A549 (cell line): ENCODE measurements at regions of chr17 and their contacts with region 1.

Region 1: GRCh38 chr17:49707608-49708514 is at the start of gene SLC35B1:
- DNase-seq: peak; percentile 100
- ATAC-seq: peak; percentile 97 to 99
- H3K4me3 ChIP-seq: peak within 1 kb of the TSS; percentile 87
- H3K27ac ChIP-seq: peak within 1 kb of the TSS; percentile 90
- H3K4me1 ChIP-seq: peaks cover 10% of the 10 kb centered on the region
- CTCF ChIP-seq: peak; percentile 96
- EP300 ChIP-seq: 0 out of 5 replicates have a peak, but pooled peaks of 1 of the 2 experiments have one; percentile 25
- POLR2A ChIP-seq: peak; percentile 75
- RAD21 ChIP-seq: peak; percentile 63 to 68
- polyA plus RNA-seq, gene SLC35B1: 191 and 287 TPM in 2 replicates

Region 2: GRCh38 chr17:49694847-49695683 is 12.8 kb before region 1 on chr17:
- CTCF ChIA-PET with region 1: interaction called, 481 read pairs
- POLR2A ChIA-PET with region 1: interaction called, 19 read pairs
- DNase-seq: peak; percentile 33 to 58
- ATAC-seq: peak; percentile 36 to 64; a peak in 4 of 6 replicates
- H3K4me3 ChIP-seq: no peak overlapping the region
- H3K27ac ChIP-seq: no peak overlapping the region
- H3K4me1 ChIP-seq: no peaks in the 10 kb centered on the region
- CTCF ChIP-seq: peak; percentile 98
- EP300 ChIP-seq: no peak
- POLR2A ChIP-seq: no peak
- RAD21 ChIP-seq: peak; percentile 98

Region 3: GRCh38 chr17:49779739-49780231 is 71.9 kb after region 1 on chr17:
- CTCF ChIA-PET with region 1: interaction called, 13 read pairs
- POLR2A ChIA-PET with region 1: interaction called, 3 read pairs
- DNase-seq: peak; percentile 34 to 60
- ATAC-seq: peak; percentile 84 to 86
- H3K4me3 ChIP-seq: no peak overlapping the region
- H3K27ac ChIP-seq: no peak overlapping the region
- H3K4me1 ChIP-seq: no peaks in the 10 kb centered on the region
- CTCF ChIP-seq: peak; percentile 54
- EP300 ChIP-seq: no peak
- POLR2A ChIP-seq: no peak
- RAD21 ChIP-seq: peak; percentile 37 to 54; a peak in 4 of 5 replicates

Region 4: DNA sequence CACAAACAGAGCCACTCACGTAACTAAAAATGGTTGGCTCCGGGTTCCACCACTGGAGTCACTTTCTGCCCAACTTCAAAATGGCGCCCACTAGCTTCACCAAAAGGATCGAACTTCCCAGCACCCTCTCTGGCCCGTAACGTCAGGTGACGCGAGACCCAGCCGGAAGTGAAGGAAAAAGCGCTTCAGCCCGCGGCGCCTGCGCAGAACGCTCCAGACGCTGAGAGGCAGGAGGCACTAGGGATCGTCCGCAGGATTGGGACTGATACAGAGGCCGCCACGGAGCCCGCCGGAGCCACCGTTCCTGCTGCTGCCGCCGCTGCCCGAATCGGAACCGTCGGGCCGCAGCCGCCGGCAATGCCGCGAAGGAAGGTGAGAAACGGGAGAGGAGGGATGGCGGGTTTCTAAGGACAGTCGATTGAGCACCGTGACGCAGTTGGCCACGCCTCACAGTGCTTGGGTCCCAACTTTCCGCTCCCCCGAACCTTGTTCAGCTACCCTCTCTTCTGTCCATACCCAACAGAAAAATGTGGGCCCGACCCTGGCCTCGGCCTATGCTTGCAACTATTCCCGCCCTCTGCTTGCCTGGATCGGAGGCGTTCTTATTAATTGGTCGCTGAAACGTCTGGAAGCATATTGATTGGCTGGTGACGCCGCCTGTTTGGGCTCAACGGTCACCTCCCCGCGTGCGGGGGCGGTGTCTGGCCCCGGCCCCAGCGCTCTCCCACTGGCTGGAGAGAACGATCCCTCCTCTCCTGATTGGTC is 80.8 kb after region 1 on chr17 and contains the start of gene KAT7:
- CTCF ChIA-PET with region 1: interaction called, 7 read pairs
- POLR2A ChIA-PET with region 1: interaction called, 11 read pairs
- DNase-seq: peak; percentile 96 to 100
- ATAC-seq: peak; percentile 95 to 98
- H3K4me3 ChIP-seq: peak within 1 kb of the TSS; percentile 82
- H3K27ac ChIP-seq: peak within 1 kb of the TSS; percentile 92 to 93
- H3K4me1 ChIP-seq: peaks cover 9% of the 10 kb centered on the region
- CTCF ChIP-seq: no peak
- EP300 ChIP-seq: no peak
- POLR2A ChIP-seq: peak; percentile 63
- RAD21 ChIP-seq: no peak
- polyA plus RNA-seq, gene KAT7: 48.7 and 55.8 TPM in 2 replicates

Region 5: GRCh38 chr17:49851387-49852291 is 143.8 kb after region 1 on chr17:
- CTCF ChIA-PET with region 1: interaction called, 13 read pairs
- POLR2A ChIA-PET with region 1: interaction called, 3 read pairs
- DNase-seq: peak; percentile 66 to 73
- ATAC-seq: peak; percentile 72 to 88
- H3K4me3 ChIP-seq: peak overlapping the region; percentile 72
- H3K27ac ChIP-seq: peak overlapping the region; percentile 79 to 91
- H3K4me1 ChIP-seq: peaks cover 3% of the 10 kb centered on the region; the same call in 1 of the 3 replicates
- CTCF ChIP-seq: peak; percentile 90
- EP300 ChIP-seq: no peak
- POLR2A ChIP-seq: no peak
- RAD21 ChIP-seq: peak; percentile 84 to 89

Region 6: DNA sequence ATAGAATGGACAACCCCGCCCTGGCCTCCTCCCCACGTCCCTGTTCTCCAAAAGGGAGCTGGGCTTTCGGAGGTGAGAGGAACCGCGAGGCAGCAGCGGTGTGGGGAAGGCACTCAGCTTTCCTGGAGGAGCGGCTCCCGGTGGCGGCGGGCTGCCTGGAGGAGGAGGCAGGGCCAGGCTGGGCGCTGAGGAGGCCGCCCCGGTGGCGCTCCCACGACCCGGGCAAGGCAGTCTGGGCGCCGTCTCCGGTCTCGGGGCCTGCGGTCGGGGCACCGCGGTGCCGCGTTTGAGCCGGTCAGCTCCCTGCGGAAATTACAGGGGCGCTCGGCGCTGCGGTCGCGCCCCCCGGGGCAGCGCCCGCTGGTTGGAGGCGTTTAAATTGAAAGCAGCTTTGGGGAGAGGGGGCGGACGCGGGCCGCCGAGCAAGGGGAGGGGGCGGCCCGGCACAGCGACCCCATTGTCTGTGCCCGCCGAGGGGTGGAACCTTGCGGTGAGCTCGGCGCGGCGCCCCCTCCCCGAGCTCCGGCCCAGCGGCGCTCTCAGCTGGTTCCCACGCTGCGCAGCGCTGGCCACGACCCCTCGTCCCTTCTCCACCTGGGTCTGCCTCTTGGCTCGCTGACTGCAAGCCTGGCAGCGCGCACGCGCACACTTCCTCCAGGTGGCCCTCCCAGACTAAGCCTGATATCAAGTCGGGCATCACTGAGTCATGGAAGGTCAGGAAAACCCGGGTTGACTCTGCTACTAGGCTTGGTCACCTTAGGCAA is 202.4 kb after region 1 on chr17:
- CTCF ChIA-PET with region 1: no interaction called
- POLR2A ChIA-PET with region 1: no interaction called
- DNase-seq: peak; percentile 39 to 55
- ATAC-seq: peak in 1 of 2 experiments; percentile 25; a peak in 2 of 6 replicates
- H3K4me3 ChIP-seq: peak overlapping the region; percentile 26; the same call in 2 of the 3 replicates
- H3K27ac ChIP-seq: peak overlapping the region in 1 of 2 experiments; percentile 63; a peak in 2 of 6 replicates
- H3K4me1 ChIP-seq: peaks cover 20% of the 10 kb centered on the region
- CTCF ChIP-seq: no peak
- EP300 ChIP-seq: no peak
- POLR2A ChIP-seq: no peak
- RAD21 ChIP-seq: no peak